ENCODE measurements at regions of chr21 and their contacts with region 1.

Region 1: GRCh38 chr21:39441502-39442475 is 3.8 kb downstream of the LCA5L start:
- DNase-seq: peak; percentile 39
- H3K4me3 Mint-ChIP-seq: no peak overlapping the region
- H3K27ac Mint-ChIP-seq: no peak overlapping the region
- H3K4me1 Mint-ChIP-seq: peaks cover 12% of the 10 kb centered on the region
- H3K27me3 Mint-ChIP-seq: peaks cover 37% of the 10 kb centered on the region

Region 2: GRCh38 chr21:39336457-39337030 is 105.2 kb before region 1 on chr21:
- CTCF ChIA-PET with region 1: no interaction called
- POLR2A ChIA-PET with region 1: no interaction called
- DNase-seq: no peak
- H3K4me3 Mint-ChIP-seq: no peak overlapping the region
- H3K27ac Mint-ChIP-seq: no peak overlapping the region
- H3K4me1 Mint-ChIP-seq: no peaks in the 10 kb centered on the region
- H3K27me3 Mint-ChIP-seq: no peaks in the 10 kb centered on the region

Region 3: GRCh38 chr21:39430457-39430856 is 11.3 kb before region 1 on chr21:
- CTCF ChIA-PET with region 1: interaction called, 18 read pairs
- POLR2A ChIA-PET with region 1: no interaction called
- DNase-seq: no peak
- H3K4me3 Mint-ChIP-seq: no peak overlapping the region
- H3K27ac Mint-ChIP-seq: no peak overlapping the region
- H3K4me1 Mint-ChIP-seq: no peaks in the 10 kb centered on the region
- H3K27me3 Mint-ChIP-seq: peaks cover 13% of the 10 kb centered on the region

Region 4: DNA sequence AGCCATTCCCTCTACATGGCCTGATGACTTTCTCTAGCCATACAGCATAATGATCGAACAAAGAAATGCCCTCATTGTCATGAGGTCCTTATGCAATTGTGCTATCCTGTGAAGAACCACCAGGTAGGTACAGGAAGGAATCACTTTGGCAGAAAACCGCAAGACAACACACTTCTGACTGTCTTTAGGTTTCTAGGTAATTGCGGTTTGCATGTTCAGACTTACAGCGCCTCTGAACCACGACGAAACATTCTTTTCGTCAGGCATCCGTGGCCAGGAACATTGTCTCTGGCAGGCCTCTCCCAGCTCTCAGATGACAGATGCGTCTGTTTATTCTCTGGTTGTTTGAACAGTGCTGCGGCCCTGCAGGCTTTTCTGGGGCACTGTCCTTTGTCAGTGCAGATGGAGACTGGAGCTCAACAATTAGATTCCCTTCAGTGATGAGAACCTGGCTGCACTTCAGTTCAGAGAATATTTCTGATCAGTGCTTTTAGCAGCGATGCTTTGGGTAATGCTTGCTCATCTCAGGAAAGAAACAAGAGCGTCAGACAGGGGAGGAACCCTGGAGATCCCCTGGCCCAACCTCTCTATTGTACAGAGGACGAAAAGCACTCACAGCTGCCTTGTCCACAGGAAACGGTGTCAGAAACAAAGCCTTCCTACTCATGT is 234.3 kb after region 1 on chr21:
- CTCF ChIA-PET with region 1: no interaction called
- POLR2A ChIA-PET with region 1: no interaction called
- DNase-seq: no peak
- H3K4me3 Mint-ChIP-seq: no peak overlapping the region
- H3K27ac Mint-ChIP-seq: no peak overlapping the region
- H3K4me1 Mint-ChIP-seq: no peaks in the 10 kb centered on the region
- H3K27me3 Mint-ChIP-seq: no peaks in the 10 kb centered on the region